Psoas muscle (tissue), 8 donors: ENCODE measurements at regions of chr9 and their contacts with region 1.

Region 1: GRCh38 chr9:5450359-5451091 is at the start of gene CD274:
- DNase-seq: peak; percentile 89 to 94
- ATAC-seq: peak; percentile 98 to 99 (median 99)
- H3K4me3 ChIP-seq: peak within 1 kb of the TSS; percentile 70
- H3K27ac ChIP-seq: peak within 1 kb of the TSS; percentile 73
- H3K4me1 ChIP-seq: peaks cover 3% of the 10 kb centered on the region
- H3K27me3 ChIP-seq: no peaks in the 10 kb centered on the region
- CTCF ChIP-seq: peak; percentile 71
- total RNA-seq, gene CD274: 0.93 to 4.6 (median 2.1) TPM

Region 2: GRCh38 chr9:5375091-5375490 is 75.4 kb before region 1 on chr9:
- intact Hi-C with region 1: no loop called
- DNase-seq: no peak
- ATAC-seq: no peak
- H3K4me3 ChIP-seq: no peak overlapping the region
- H3K27ac ChIP-seq: no peak overlapping the region
- H3K4me1 ChIP-seq: no peaks in the 10 kb centered on the region
- H3K27me3 ChIP-seq: no peaks in the 10 kb centered on the region
- CTCF ChIP-seq: no peak

Region 3: DNA sequence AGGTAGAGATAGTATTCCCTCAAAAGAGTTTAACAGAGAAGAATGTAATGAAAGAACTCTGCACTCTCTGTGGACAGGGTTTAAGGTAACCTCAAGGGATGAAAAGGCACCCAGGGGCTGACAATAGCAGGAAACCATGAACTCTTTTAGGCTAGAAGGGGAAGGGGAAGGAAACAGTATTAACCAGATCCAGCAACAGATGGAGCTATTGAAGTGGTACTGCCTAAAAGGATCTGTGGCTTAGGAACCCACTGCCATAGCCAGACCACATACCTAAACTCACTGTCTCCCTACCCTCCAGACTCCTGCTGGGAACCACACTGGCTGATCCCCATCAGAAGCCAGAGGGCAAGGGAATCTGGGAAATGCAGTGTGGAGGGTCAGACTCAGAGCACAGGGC is 48.3 kb before region 1 on chr9:
- intact Hi-C with region 1: no loop called
- DNase-seq: no peak
- ATAC-seq: no peak
- H3K4me3 ChIP-seq: no peak overlapping the region
- H3K27ac ChIP-seq: no peak overlapping the region
- H3K4me1 ChIP-seq: no peaks in the 10 kb centered on the region
- H3K27me3 ChIP-seq: no peaks in the 10 kb centered on the region
- CTCF ChIP-seq: no peak

Region 4: GRCh38 chr9:5586391-5586802 is 135.9 kb after region 1 on chr9:
- intact Hi-C with region 1: loop called (anchors 1 to 2 kb)
- DNase-seq: no peak
- ATAC-seq: no peak
- H3K4me3 ChIP-seq: no peak overlapping the region
- H3K27ac ChIP-seq: no peak overlapping the region
- H3K4me1 ChIP-seq: no peaks in the 10 kb centered on the region
- H3K27me3 ChIP-seq: no peaks in the 10 kb centered on the region
- CTCF ChIP-seq: no peak

Region 5: GRCh38 chr9:5688109-5688508 is 237.6 kb after region 1 on chr9:
- intact Hi-C with region 1: no loop called
- DNase-seq: no peak
- ATAC-seq: no peak
- H3K4me3 ChIP-seq: no peak overlapping the region
- H3K27ac ChIP-seq: no peak overlapping the region
- H3K4me1 ChIP-seq: peaks cover 7% of the 10 kb centered on the region
- H3K27me3 ChIP-seq: no peaks in the 10 kb centered on the region
- CTCF ChIP-seq: no peak